ENCODE measurements at regions of chr21 and their contacts with region 1.

Region 1: DNA sequence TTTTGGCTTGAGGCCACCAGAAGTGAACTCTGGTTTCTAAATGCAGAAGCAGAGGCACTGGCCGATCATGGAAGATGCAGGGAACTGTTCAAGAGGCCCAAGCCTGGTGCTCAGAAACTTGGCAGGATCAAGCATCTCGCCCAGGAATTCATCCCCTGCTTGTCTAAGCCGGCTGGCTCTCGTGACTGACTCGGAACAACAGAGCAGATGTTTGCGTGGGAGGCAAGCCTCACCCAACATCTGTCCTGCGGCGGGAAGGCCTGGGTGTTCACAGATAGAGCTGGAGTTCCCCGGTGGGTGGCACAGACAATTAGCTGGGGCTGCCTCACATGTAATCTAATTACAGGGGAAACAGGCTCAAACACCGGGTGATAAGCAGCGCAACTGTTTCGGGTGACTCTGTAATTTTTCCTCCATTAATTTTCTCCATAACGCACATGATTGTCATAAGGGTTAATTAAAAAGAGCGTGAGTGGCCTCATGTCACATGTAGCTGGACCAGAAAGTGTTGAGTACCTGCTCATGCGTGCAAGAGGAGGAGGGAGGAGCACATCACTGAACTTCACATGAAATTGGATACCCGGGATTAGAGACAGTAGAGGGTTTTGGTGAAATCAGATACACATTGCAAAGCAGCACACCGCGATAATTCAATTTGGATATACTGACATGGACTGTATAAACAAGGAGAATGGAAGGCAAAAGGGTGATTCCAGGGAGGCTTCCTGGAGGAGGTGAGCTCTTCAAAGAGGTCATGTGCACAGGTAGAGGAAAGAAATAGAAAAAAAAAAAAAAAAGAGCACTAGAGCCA is 180.0 kb downstream of the ETS2 start:
- DNase-seq: peak; percentile 91
- H3K4me3 ChIP-seq: no peak overlapping the region
- H3K27ac ChIP-seq: peak overlapping the region; percentile 60 to 79 (median 73)
- H3K4me1 ChIP-seq: peaks cover 0 to 68% (median 62%) of the 10 kb centered on the region in 4 donors
- H3K27me3 ChIP-seq: no peaks in the 10 kb centered on the region
- CTCF ChIP-seq: no peak
- EP300 ChIP-seq: peak in 1 of 4 donors; percentile 74
- POLR2A ChIP-seq: no peak

Region 2: GRCh38 chr21:38755681-38756371 is 229.9 kb before region 1 on chr21:
- intact Hi-C with region 1: loop called (anchors 2 kb)
- DNase-seq: peak; percentile 86
- H3K4me3 ChIP-seq: no peak overlapping the region
- H3K27ac ChIP-seq: peak overlapping the region; percentile 64 to 89 (median 76)
- H3K4me1 ChIP-seq: peaks cover 0 to 76% (median 57%) of the 10 kb centered on the region in 4 donors
- H3K27me3 ChIP-seq: no peaks in the 10 kb centered on the region
- CTCF ChIP-seq: no peak
- EP300 ChIP-seq: peak in 1 of 4 donors; percentile 17
- POLR2A ChIP-seq: no peak

Region 3: DNA sequence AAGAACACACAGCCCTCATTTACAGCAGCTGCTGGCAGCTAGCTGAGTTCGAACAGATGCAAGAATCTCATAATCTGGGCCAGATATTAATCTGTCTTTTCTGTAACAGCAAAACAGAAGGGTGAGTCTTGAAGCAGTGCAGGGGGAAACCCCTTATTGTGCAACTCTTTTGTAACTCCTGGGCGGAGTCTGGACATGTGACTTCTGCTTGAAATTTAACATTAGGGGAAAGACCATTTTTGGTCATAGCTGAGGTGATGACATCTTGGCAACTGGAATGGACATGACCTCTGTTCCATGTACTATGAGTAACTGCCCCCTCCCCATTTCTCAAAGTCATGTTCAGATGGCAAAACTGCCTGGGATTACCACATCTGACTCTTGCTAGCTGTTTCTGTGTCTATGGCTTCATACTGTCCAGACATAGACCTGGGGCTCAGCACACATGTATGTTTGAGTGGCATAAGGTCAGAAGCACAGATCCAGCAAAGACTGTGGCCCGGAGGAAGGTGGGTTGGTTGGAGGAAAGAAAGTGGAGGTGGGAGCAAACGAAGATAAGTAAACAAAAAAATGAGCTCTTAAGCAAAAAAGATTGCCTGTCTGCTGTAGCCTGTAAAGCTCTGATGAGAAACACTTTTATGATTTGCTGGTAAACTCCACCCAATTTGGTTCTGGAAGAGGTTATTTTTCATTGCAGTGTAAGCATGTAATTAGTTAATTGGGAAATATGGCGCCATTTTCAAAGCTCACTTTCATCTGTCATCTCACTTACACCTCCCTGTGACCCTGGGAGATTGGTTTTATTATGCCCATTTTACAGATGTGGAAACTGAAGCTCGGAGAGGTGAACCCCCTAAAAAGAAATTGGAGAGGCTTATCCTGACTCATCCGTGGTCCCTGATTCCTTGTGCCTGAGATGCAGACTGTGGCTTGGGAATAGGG is 154.0 kb before region 1 on chr21:
- intact Hi-C with region 1: loop called (anchors 1 kb)
- DNase-seq: peak; percentile 95
- H3K4me3 ChIP-seq: no peak overlapping the region
- H3K27ac ChIP-seq: peak overlapping the region; percentile 47 to 79 (median 61)
- H3K4me1 ChIP-seq: peaks cover 0 to 16% (median 11%) of the 10 kb centered on the region in 4 donors
- H3K27me3 ChIP-seq: no peaks in the 10 kb centered on the region
- CTCF ChIP-seq: no peak
- EP300 ChIP-seq: peak; percentile 64 to 94 (median 86)
- POLR2A ChIP-seq: no peak

Region 4: DNA sequence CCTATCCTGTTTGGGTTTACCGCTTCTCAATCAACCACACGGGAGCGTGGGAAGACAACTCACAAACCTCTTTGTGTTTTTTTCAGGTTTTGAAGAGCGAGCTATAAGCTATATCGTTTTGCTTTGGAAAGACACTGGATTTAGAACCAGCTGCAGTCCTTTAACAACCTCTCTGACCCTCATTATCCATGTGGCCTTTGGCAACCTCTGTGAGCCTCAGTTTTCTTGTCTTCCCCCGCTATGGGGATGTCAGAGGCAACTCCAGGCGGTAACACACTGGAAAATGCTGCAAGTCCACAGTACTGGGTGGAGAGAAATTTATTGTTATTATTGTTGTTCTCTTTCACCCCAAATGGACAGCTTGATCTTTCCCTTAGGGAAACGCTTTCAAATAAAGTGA is 80.0 kb before region 1 on chr21:
- intact Hi-C with region 1: loop called (anchors 2 kb)
- DNase-seq: no peak
- H3K4me3 ChIP-seq: no peak overlapping the region
- H3K27ac ChIP-seq: peak overlapping the region in 3 of 4 donors; percentile 29 to 79 (median 79)
- H3K4me1 ChIP-seq: peaks cover 0 to 17% (median 17%) of the 10 kb centered on the region in 4 donors
- H3K27me3 ChIP-seq: no peaks in the 10 kb centered on the region
- CTCF ChIP-seq: no peak
- EP300 ChIP-seq: no peak
- POLR2A ChIP-seq: no peak

Region 5: DNA sequence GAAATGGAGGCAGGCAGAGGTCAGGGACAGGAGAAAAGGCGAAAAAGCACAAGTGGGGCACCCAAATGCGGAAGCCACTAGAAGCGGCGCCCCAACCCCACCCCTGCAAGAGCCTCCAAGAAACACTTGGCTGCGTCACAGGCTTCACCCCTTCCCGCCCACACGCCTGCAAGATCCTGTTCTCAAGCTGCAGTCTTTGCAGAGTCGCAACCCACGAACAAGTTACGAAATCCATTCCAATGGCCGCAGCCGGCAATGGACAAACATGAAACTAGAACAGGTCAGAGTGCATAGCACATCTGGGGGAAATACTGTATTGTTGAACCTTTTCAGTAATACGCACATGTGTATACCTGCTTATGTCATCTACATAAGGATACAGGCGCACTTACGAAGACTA is 93.8 kb after region 1 on chr21:
- intact Hi-C with region 1: no loop called
- DNase-seq: peak; percentile 85
- H3K4me3 ChIP-seq: no peak overlapping the region
- H3K27ac ChIP-seq: peak overlapping the region in 1 of 4 donors; percentile 8
- H3K4me1 ChIP-seq: peaks cover 0 to 5% (median 2%) of the 10 kb centered on the region in 4 donors
- H3K27me3 ChIP-seq: no peaks in the 10 kb centered on the region
- CTCF ChIP-seq: no peak
- EP300 ChIP-seq: peak in 2 of 4 donors; percentile 22 to 36
- POLR2A ChIP-seq: no peak

Region 6: GRCh38 chr21:40049394-40050290 is 1063.9 kb after region 1 on chr21:
- intact Hi-C with region 1: loop called (anchors 10 kb)
- DNase-seq: peak; percentile 83
- H3K4me3 ChIP-seq: no peak overlapping the region
- H3K27ac ChIP-seq: peak overlapping the region; percentile 84 to 88 (median 85)
- H3K4me1 ChIP-seq: peaks cover 0 to 80% (median 66%) of the 10 kb centered on the region in 4 donors
- H3K27me3 ChIP-seq: no peaks in the 10 kb centered on the region
- CTCF ChIP-seq: peak in 1 of 4 experiments; percentile 22
- EP300 ChIP-seq: peak in 1 of 4 donors; percentile 26
- POLR2A ChIP-seq: no peak